CD8-positive, alpha-beta T cell (primary cell): ENCODE measurements at regions of chr2 and their contacts with region 1.

Region 1: DNA sequence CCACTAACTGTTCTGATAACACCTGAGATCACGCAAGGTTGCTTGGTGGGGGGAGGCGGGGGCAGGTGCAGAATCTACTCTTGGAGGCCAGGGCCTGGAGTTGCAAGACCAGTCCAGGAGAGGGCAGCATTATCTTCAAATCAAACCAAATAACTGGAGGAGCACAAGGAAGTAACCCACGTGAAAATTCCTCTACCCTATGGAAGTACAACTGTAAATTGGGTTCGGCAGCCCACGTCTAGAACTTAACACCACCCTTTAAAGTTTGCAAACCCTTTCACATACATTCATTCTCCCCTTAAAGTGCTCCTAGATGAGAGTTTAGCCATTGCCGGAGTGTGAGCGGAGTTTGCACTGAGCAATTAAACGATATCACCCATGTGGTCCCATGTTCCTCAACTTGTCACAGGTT is 19.6 kb upstream of the CXCR1 start:
- DNase-seq: peak; percentile 48 to 85 (median 71)
- ATAC-seq: peak; percentile 100
- H3K4me3 ChIP-seq: no peak overlapping the region
- H3K4me3 Mint-ChIP-seq: no peak overlapping the region
- H3K27ac ChIP-seq: no peak overlapping the region
- H3K27ac Mint-ChIP-seq: no peak overlapping the region
- H3K4me1 ChIP-seq: peaks cover 8% of the 10 kb centered on the region
- H3K4me1 Mint-ChIP-seq: peaks cover 8% of the 10 kb centered on the region
- H3K27me3 ChIP-seq: no peaks in the 10 kb centered on the region
- H3K27me3 Mint-ChIP-seq: no peaks in the 10 kb centered on the region
- CTCF ChIP-seq: peak; percentile 74

Region 2: DNA sequence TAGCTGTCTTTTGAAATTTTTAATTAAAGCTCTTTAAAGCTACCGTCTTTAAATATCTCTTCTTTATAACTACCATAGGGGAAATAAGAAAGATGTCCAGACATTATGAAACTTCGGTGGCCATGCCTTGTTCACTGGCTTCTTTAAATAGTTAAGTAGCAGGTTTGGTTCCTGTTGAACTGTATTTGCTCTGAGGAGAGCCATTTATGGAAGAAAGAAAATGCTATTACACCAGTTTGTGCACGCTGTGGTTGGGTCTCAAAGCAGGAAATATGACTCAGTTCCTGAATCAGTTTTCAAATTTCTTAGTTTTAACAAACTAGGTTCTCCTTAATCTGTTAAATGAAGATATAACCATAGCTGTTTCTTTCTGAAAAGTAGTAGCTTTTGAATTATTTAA is 42.9 kb after region 1 on chr2:
- CTCF ChIA-PET with region 1: interaction called, 4 read pairs
- POLR2A ChIA-PET with region 1: interaction called, 3 read pairs
- intact Hi-C with region 1: loop called in 1 of 2 experiments (anchors 5 kb)
- DNase-seq: peak in 7 of 9 experiments; percentile 36 to 81 (median 49)
- ATAC-seq: peak; percentile 79
- H3K4me3 ChIP-seq: no peak overlapping the region
- H3K4me3 Mint-ChIP-seq: peak overlapping the region; percentile 44
- H3K27ac ChIP-seq: peak overlapping the region in 1 of 2 experiments; percentile 63
- H3K27ac Mint-ChIP-seq: peak overlapping the region; percentile 89
- H3K4me1 ChIP-seq: peaks cover 66% of the 10 kb centered on the region
- H3K4me1 Mint-ChIP-seq: peaks cover 78% of the 10 kb centered on the region
- H3K27me3 ChIP-seq: no peaks in the 10 kb centered on the region
- H3K27me3 Mint-ChIP-seq: no peaks in the 10 kb centered on the region
- CTCF ChIP-seq: no peak

Region 3: DNA sequence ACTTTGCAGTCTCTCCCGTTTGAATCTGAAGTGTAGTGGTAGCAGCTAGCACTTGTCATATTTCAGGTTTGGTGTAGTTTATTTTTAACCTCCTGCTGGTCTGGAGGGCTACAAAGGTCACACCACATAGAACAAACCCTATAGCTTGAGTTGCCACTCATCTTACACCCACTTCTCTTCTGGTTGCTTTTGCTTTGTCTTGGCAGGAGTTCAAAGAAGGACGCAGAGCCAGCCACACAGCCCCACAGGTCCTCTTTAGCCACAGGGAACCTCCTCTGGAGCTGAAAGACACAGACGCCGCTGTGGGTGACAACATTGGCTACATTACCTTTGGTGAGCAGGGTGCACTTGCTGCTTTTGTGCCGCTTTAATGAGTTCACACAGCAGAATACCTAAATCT is 58.9 kb after region 1 on chr2:
- CTCF ChIA-PET with region 1: interaction called, 4 read pairs
- POLR2A ChIA-PET with region 1: no interaction called
- intact Hi-C with region 1: loop called in 1 of 2 experiments (anchors 5 kb)
- DNase-seq: peak in 1 of 9 experiments; percentile 33
- ATAC-seq: peak; percentile 44
- H3K4me3 ChIP-seq: no peak overlapping the region
- H3K4me3 Mint-ChIP-seq: no peak overlapping the region
- H3K27ac ChIP-seq: peak overlapping the region in 1 of 2 experiments; percentile 23
- H3K27ac Mint-ChIP-seq: peak overlapping the region; percentile 63
- H3K4me1 ChIP-seq: peaks cover 35% of the 10 kb centered on the region
- H3K4me1 Mint-ChIP-seq: peaks cover 41% of the 10 kb centered on the region
- H3K27me3 ChIP-seq: no peaks in the 10 kb centered on the region
- H3K27me3 Mint-ChIP-seq: no peaks in the 10 kb centered on the region
- CTCF ChIP-seq: no peak

Region 4: GRCh38 chr2:218257390-218257981 is 71.1 kb after region 1 on chr2:
- CTCF ChIA-PET with region 1: interaction called, 16 read pairs
- POLR2A ChIA-PET with region 1: no interaction called
- intact Hi-C with region 1: loop called (anchors 1 kb)
- DNase-seq: peak; percentile 37 to 84 (median 66)
- ATAC-seq: peak; percentile 85
- H3K4me3 ChIP-seq: no peak overlapping the region
- H3K4me3 Mint-ChIP-seq: peak overlapping the region; percentile 56
- H3K27ac ChIP-seq: peak overlapping the region in 1 of 2 experiments; percentile 72
- H3K27ac Mint-ChIP-seq: peak overlapping the region; percentile 80
- H3K4me1 ChIP-seq: peaks cover 9% of the 10 kb centered on the region
- H3K4me1 Mint-ChIP-seq: peaks cover 23% of the 10 kb centered on the region
- H3K27me3 ChIP-seq: no peaks in the 10 kb centered on the region
- H3K27me3 Mint-ChIP-seq: no peaks in the 10 kb centered on the region
- CTCF ChIP-seq: peak; percentile 48

Region 5: DNA sequence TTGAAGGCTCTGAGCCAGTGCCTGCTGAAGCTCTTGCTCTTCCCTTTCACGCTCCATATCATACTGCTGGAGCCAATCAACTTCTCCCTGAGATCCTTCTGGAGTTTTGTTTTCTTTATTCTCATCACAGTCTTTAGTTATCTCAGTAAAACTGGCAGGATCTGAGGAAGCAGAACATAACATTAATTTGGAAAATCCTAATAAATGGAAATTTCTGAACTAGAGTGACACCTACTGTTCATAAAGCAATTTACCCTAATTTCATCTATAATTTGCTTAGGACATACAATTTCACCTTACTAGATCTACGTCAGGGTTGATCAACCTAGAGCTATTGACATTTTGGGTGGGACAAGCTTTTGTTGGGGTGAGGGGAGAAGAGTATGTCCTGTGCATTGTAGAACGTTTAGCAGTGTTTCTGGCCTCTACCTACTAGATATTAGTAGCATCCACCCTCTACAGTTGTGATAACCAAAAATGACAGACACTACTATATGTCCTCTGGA is 279.7 kb after region 1 on chr2:
- CTCF ChIA-PET with region 1: interaction called, 3 read pairs
- POLR2A ChIA-PET with region 1: no interaction called
- intact Hi-C with region 1: loop called in 1 of 2 experiments (anchors 5 kb)
- DNase-seq: peak in 2 of 9 experiments; percentile 21 to 46
- ATAC-seq: peak; percentile 26
- H3K4me3 ChIP-seq: no peak overlapping the region
- H3K4me3 Mint-ChIP-seq: no peak overlapping the region
- H3K27ac ChIP-seq: no peak overlapping the region
- H3K27ac Mint-ChIP-seq: no peak overlapping the region
- H3K4me1 ChIP-seq: no peaks in the 10 kb centered on the region
- H3K4me1 Mint-ChIP-seq: peaks cover 11% of the 10 kb centered on the region
- H3K27me3 ChIP-seq: no peaks in the 10 kb centered on the region
- H3K27me3 Mint-ChIP-seq: no peaks in the 10 kb centered on the region
- CTCF ChIP-seq: peak; percentile 52